ENCODE measurements at regions of chr5 and their contacts with region 1.

Region 1: GRCh38 chr5:143016777-143017516 is 246.8 kb downstream of the ARHGAP26 start:
- DNase-seq: no peak

Region 2: DNA sequence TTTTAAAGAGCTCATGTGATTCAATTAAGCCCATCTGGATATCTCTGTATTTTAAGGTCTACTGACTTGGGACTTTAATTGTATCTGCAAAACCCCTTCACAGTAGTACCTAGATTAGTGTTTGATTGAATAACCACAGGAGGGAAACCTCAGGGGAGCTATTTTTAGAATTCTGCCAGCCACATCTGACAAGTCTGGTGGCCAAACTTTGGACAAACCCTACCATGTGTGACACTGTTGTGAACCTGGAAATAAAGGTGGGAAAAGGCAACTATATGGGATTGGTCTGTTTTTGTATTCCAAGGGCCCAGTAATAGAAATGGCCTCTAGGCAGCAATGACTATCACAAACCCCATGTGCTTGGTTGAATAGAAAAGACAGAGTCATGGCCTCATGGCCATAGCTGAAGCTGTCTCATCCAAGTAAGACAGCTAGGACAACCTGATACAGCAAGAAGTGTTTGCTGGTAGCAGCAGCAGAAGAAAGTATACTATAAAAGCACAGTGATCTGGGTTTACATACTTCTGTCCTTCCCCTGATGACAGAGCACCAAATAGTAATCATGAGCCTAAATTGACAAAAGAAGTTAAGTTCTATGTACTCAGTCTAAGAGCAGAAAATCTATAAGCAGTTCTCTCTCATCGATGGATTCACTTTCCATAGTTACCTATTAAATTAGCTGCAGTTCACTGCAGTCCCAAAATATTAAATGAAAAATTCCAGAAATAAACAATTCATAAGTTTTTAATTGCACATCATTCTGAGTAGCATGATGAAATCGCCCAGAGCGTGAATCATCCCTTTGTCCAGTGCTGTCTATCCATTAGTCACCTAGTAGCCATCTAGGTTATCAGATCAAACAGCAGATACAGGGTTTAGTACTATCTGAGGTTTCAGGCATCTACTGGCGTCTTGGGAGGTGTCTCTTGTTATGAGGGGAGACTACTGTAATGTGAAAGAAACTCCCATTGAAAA is 57.0 kb before region 1 on chr5:
- intact Hi-C with region 1: no loop called
- DNase-seq: no peak

Region 3: GRCh38 chr5:142973932-142974331 is 43.0 kb before region 1 on chr5:
- intact Hi-C with region 1: loop called in 1 of 2 experiments (anchors 1 kb)
- DNase-seq: no peak

Region 4: DNA sequence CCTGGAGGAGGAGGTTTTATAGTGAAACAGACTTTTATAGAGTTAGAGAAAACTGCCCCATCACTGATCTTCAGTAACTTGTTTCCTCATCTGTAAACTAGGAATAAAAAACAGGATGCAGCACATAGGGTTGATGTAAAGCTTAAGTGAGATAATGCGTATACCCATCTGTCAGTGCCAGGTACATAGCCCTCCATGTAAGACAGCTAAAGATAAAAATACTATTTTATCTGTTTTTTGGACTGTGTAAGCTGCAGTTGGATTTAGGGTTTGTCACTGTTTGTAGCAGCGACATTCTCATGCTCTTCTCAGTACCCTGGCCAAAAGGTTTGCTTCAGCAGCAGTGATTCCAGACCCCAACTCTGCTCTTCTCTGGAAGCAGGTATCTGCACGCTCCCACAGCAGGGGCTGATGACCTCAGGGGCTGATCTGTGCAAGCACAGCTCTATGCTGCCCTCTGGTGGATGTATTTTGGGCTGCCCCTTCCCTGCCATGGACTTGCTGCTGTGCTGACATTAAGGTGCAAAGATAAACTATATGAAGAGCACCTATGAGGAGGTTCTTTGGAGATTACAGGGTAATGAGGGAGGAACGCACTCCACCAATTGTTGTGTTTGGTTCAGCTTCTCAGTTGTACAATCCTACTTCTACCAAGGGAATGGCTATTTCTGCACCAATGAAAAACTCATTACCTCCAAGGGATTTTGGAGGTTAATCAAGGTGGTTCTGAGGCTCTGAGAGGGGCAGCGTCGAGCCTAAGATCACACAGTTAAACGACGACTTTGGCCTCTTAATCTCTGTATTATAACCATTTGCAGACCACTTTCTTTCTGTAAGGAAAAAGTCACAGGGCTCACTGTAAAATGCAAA is 808.1 kb after region 1 on chr5:
- intact Hi-C with region 1: loop called in 1 of 2 experiments (anchors 10 kb)
- DNase-seq: peak; percentile 91